IMR-90 (cell line): ENCODE measurements at regions of chr1 and their contacts with region 1.

Region 1: GRCh38 chr1:11478571-11479374 is at the start of gene DISP3:
- DNase-seq: peak; percentile 34
- ATAC-seq: peak; percentile 99
- H3K4me3 ChIP-seq: peak within 1 kb of the TSS; percentile 44
- H3K27ac ChIP-seq: peak within 1 kb of the TSS; percentile 49; the same call in 1 of the 2 replicates
- H3K4me1 ChIP-seq: no peaks in the 10 kb centered on the region
- H3K27me3 ChIP-seq: peaks cover 11% of the 10 kb centered on the region; the same call in 1 of the 2 replicates
- CTCF ChIP-seq: peak; percentile 62
- POLR2A ChIP-seq: no peak
- RAD21 ChIP-seq: peak; percentile 41
- total RNA-seq, gene DISP3: not detected in 2 replicates

Region 2: GRCh38 chr1:11262171-11263049 is 216.4 kb before region 1 on chr1 and contains the start of gene MTOR:
- CTCF ChIA-PET with region 1: no interaction called
- POLR2A ChIA-PET with region 1: no interaction called
- dilution Hi-C with region 1: no loop called
- in situ Hi-C with region 1: no loop called
- intact Hi-C with region 1: loop called (anchors 10 kb)
- DNase-seq: peak; percentile 100
- ATAC-seq: peak; percentile 99
- H3K4me3 ChIP-seq: peak within 1 kb of the TSS; percentile 70
- H3K27ac ChIP-seq: peak within 1 kb of the TSS; percentile 76
- H3K4me1 ChIP-seq: no peaks in the 10 kb centered on the region
- H3K27me3 ChIP-seq: no peaks in the 10 kb centered on the region
- CTCF ChIP-seq: 0 out of 2 replicates have a peak, but pooled peaks have one; percentile 14
- POLR2A ChIP-seq: peak; percentile 65; the same call in 1 of the 2 replicates
- RAD21 ChIP-seq: 0 out of 2 replicates have a peak, but pooled peaks have one; percentile 10
- total RNA-seq, gene MTOR: 33.6 and 36.7 TPM in 2 replicates

Region 3: DNA sequence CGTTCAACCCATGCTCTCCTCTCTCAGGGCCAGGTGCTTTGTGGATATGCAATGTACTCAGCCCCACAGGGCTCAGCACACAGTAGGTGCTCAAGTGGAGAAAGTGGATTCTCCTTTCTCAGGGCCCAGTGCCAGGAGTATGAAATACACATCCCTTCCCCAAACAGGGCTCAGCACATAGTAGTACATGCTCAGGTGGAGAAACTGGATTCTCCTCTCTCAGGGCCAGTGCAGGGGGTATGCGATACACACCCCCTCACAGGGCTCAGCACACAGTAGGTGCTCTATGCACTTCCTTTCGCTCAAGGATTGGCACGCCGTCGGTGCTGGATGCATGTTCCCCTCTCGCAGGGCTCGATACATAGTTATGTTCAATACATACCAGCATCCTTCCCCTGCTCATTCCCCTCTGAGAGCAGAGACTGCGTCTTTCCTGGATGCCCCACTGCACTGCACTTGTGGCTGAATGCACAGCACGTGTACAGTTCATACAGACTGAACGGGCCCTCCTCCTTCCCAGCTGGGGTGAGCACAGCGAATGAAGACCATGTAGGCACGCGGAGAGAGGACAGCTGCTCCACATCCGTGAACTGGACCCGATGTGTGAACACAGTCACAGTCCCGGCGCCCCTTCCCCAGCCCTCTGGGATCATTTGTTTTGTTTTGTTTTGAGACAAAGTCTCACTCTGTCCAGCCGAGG is 16.4 kb before region 1 on chr1:
- CTCF ChIA-PET with region 1: no interaction called
- POLR2A ChIA-PET with region 1: no interaction called
- dilution Hi-C with region 1: no loop called
- in situ Hi-C with region 1: no loop called
- intact Hi-C with region 1: no loop called
- DNase-seq: no peak
- ATAC-seq: no peak
- H3K4me3 ChIP-seq: no peak overlapping the region
- H3K27ac ChIP-seq: no peak overlapping the region
- H3K4me1 ChIP-seq: no peaks in the 10 kb centered on the region
- H3K27me3 ChIP-seq: peaks cover 5% of the 10 kb centered on the region; the same call in 1 of the 2 replicates
- CTCF ChIP-seq: no peak
- POLR2A ChIP-seq: no peak
- RAD21 ChIP-seq: no peak

Region 4: GRCh38 chr1:11520531-11521233 is 41.9 kb after region 1 on chr1:
- CTCF ChIA-PET with region 1: no interaction called
- POLR2A ChIA-PET with region 1: no interaction called
- dilution Hi-C with region 1: no loop called
- in situ Hi-C with region 1: no loop called
- intact Hi-C with region 1: no loop called
- DNase-seq: no peak
- ATAC-seq: no peak
- H3K4me3 ChIP-seq: no peak overlapping the region
- H3K27ac ChIP-seq: no peak overlapping the region
- H3K4me1 ChIP-seq: no peaks in the 10 kb centered on the region
- H3K27me3 ChIP-seq: no peaks in the 10 kb centered on the region
- CTCF ChIP-seq: no peak
- POLR2A ChIP-seq: no peak
- RAD21 ChIP-seq: no peak

Region 5: DNA sequence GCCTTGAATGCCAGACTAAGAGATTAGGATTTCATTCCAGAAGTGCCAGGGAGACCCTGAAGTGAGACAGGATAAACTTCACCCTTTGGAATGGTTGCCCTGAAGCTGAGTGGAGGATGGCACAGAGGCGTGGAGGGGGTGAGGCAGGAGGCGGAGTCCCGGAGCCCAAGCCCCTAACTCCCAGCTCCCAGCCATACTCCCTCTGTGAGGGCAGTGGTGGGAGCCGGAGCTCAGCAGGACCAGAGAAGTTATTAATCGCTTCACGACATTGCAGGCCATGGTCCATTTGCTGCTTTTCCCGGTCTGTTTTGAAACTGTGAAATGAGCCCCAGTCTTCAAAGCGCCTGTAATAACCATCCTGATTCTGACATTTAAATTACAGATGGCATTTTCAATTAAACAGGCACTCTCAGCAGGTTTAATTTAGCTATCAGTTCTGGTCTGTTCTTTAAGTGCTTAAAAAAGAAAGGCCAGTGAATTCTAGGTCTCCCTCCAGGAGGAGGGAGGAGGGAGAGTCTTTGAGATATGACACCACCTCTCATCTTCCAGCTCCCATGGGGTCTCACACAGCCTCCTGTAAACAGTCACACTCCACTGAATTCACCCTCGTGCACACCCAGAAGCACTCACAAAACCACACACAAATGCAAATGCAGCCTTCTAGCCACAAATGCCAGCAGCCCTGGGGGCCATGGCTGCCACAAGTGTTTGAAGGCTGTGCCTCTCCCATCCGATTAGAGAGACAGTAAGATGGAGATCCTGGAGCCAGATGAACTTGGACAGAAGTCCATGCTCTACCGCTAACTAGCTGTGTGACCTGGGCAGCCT is 155.8 kb after region 1 on chr1:
- CTCF ChIA-PET with region 1: no interaction called
- POLR2A ChIA-PET with region 1: no interaction called
- dilution Hi-C with region 1: no loop called
- in situ Hi-C with region 1: no loop called
- intact Hi-C with region 1: loop called (anchors 1 kb)
- DNase-seq: no peak
- ATAC-seq: no peak
- H3K4me3 ChIP-seq: no peak overlapping the region
- H3K27ac ChIP-seq: no peak overlapping the region
- H3K4me1 ChIP-seq: no peaks in the 10 kb centered on the region
- H3K27me3 ChIP-seq: peaks cover 7% of the 10 kb centered on the region; the same call in 1 of the 2 replicates
- CTCF ChIP-seq: no peak
- POLR2A ChIP-seq: no peak
- RAD21 ChIP-seq: no peak

Region 6: DNA sequence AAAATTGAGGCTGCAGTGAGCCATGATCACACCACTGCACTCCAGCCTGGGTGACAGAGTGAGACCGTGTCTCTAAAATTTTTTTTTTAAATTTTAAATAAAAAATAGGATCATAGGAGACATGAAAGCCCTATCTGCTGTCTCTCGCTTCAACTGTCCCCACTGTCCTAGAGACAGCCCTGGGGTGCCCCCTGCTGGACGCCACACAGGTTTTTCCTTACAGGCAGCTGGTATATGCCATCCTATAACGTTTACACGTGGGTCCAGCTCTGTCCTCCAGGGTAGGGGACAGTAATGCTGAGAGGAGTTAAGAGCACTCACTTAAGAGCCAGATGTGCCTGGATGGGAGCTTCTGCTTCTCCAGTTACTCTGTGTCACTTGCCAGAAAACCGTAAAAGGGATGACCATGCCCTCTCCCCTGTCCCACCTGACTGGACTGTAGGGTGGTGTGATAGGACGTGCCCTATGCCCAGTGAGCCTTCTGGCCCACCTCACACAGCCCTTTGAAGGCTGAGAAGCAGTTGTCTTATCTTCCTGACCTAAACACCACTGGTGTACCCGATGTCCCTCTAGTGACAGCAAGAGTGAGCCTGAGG is 167.0 kb after region 1 on chr1:
- CTCF ChIA-PET with region 1: no interaction called
- POLR2A ChIA-PET with region 1: no interaction called
- dilution Hi-C with region 1: no loop called
- in situ Hi-C with region 1: no loop called
- intact Hi-C with region 1: loop called (anchors 2 kb)
- DNase-seq: peak; percentile 60
- ATAC-seq: peak; percentile 74
- H3K4me3 ChIP-seq: no peak overlapping the region
- H3K27ac ChIP-seq: no peak overlapping the region
- H3K4me1 ChIP-seq: no peaks in the 10 kb centered on the region; the same call in 1 of the 2 replicates
- H3K27me3 ChIP-seq: peaks cover 19% of the 10 kb centered on the region
- CTCF ChIP-seq: peak; percentile 74
- POLR2A ChIP-seq: no peak
- RAD21 ChIP-seq: peak; percentile 73